AG04449 (cell line): ENCODE measurements at regions of chr9 and their contacts with region 1.

Region 1: DNA sequence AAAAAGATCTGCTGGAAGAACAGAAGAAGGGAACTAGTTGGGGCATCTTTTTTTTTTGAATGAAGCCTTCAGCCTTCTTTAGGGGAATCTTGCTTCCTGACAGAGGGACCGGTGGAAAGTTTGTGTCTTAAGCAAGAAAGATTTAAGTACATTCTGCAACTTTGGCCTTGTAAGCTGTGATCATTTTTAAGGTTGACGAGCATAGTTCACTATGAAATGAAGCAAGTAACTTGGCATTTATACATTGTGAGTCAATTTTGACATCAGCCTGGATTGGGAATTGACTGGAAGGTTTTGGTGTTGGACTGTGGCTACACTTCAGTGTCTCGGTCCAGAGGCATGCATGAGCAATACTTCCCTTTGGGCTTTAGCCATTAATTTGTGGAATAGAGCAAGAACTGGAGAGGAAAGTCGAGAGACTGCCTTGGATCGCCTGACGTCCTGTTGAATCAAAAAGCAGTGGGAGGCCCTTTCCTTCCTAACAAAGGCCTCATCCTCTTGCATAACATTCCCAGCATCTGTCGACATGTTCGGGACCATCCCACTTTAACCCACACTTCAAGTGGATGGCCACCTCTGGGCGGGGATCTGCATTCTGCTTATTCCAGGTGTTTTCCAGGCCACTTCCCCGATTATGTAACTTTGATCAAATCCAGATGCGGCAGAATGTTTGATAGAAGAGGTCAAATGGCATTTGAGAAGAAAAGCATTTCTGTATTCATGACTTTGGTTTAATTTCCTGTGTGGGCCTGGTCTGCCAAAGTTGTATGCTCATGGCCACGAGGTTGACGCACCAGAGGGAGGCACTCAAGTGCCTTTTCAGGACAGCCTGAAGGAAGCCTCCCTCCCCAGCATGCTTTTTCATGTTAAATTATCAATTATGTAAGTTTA is 12.5 kb downstream of the ABL1 start:
- DNase-seq: peak; percentile 99
- H3K4me3 ChIP-seq: 0 out of 2 replicates have a peak overlapping the region, but pooled peaks have one; percentile 2
- CTCF ChIP-seq: peak; percentile 30

Region 2: DNA sequence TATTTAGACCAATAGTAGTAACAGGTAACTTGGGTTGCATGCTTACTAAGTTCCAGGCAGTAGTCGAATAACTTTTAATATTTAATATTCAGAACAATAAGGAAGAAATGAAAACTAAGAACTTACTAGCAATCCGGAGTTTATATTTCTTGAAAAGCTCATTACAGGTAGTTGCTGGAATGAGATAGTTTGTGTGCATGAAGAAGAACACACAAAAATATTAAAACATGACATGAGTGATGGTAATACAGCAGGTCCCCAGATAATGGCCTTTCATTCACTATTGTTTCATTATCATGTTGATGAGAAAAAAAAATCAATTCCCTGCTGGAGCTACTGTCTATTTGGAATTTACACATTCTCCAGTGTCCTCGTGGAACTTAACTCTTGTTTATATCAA is 109.3 kb before region 1 on chr9:
- CTCF ChIA-PET with region 1: no interaction called
- POLR2A ChIA-PET with region 1: no interaction called
- DNase-seq: no peak
- H3K4me3 ChIP-seq: no peak overlapping the region
- CTCF ChIP-seq: no peak

Region 3: DNA sequence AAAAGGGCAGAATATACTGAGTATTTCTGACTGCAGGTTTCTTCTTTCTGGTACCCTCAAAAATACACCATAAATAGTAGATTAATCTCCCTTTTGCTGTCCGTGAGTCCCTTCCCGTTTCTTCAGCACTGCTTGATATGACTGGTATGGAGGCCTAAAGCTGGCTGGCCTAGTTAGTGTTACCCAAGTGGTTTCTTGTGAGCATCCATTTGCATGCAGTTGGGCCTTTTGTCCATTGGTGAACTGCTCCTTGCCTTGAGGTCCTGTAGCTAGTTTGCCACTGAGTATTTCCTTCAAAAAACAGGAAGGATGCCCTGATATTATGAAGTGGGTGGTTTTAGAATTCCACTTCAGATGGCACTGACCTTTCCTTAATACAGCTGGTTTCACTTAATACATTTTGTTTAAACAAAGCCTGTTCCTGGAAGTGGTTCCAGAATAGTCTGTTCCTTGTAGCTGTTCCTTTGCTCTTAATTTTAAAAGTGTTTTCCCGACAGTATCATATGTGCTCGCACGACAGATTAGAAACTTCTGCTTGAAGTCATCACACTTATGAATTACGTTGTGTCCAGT is 52.6 kb before region 1 on chr9:
- CTCF ChIA-PET with region 1: no interaction called
- POLR2A ChIA-PET with region 1: no interaction called
- DNase-seq: no peak
- H3K4me3 ChIP-seq: no peak overlapping the region
- CTCF ChIP-seq: no peak

Region 4: DNA sequence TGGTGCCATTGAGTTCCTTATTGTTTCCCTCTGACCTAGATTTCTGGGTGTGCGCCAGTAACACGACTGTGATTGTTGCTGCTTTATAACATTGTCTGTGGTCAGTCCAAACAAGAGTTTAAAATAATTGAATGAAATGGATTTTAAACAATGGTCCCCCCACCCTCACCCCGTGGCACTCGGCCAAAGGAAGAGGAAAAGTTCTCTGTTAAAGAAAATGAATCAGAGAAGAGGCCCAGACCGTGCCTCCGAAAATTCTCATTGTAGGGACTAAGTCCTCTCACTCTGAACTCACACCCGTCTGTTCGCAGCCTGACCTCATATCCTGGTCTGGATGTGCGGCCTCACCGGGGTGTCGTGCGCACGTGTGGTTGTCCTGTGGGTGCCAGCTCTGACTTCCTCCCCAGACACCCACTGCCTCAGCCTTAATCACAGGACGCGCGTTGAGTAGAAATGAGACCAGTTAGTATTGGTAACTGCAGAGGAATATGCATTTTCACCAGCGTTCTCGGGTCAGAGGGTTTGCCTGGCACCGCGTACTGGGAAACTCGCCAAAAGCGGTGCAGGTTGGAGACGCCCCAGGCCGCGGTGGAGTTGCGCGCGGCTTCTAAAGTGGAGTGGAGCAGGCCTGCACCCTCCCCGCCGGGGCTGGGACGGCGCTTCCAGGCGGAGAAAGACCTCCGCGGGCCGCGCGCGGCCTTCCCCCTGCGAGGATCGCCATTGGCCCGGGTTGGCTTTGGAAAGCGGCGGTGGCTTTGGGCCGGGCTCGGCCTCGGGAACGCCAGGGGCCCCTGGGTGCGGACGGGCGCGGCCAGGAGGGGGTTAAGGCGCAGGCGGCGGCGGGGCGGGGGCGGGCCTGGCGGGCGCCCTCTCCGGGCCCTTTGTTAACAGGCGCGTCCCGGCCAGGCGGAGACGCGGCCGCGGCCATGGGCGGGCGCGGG is 12.9 kb before region 1 on chr9 and contains the start of gene ABL1:
- CTCF ChIA-PET with region 1: interaction called, 3 read pairs
- POLR2A ChIA-PET with region 1: interaction called, 19 read pairs
- DNase-seq: no peak
- H3K4me3 ChIP-seq: peak within 1 kb of the TSS; percentile 78
- CTCF ChIP-seq: no peak

Region 5: GRCh38 chr9:130860458-130861316 is 13.1 kb after region 1 on chr9:
- CTCF ChIA-PET with region 1: interaction called, 85 read pairs
- POLR2A ChIA-PET with region 1: interaction called, 24 read pairs
- DNase-seq: peak; percentile 95
- H3K4me3 ChIP-seq: no peak overlapping the region; the same call in 1 of the 2 replicates
- CTCF ChIP-seq: peak; percentile 54

Region 6: GRCh38 chr9:132032238-132032950 is 1184.8 kb after region 1 on chr9:
- CTCF ChIA-PET with region 1: no interaction called
- POLR2A ChIA-PET with region 1: no interaction called
- DNase-seq: no peak
- H3K4me3 ChIP-seq: no peak overlapping the region
- CTCF ChIP-seq: no peak